ENCODE measurements at regions of chr1 and their contacts with region 1.

Region 1: DNA sequence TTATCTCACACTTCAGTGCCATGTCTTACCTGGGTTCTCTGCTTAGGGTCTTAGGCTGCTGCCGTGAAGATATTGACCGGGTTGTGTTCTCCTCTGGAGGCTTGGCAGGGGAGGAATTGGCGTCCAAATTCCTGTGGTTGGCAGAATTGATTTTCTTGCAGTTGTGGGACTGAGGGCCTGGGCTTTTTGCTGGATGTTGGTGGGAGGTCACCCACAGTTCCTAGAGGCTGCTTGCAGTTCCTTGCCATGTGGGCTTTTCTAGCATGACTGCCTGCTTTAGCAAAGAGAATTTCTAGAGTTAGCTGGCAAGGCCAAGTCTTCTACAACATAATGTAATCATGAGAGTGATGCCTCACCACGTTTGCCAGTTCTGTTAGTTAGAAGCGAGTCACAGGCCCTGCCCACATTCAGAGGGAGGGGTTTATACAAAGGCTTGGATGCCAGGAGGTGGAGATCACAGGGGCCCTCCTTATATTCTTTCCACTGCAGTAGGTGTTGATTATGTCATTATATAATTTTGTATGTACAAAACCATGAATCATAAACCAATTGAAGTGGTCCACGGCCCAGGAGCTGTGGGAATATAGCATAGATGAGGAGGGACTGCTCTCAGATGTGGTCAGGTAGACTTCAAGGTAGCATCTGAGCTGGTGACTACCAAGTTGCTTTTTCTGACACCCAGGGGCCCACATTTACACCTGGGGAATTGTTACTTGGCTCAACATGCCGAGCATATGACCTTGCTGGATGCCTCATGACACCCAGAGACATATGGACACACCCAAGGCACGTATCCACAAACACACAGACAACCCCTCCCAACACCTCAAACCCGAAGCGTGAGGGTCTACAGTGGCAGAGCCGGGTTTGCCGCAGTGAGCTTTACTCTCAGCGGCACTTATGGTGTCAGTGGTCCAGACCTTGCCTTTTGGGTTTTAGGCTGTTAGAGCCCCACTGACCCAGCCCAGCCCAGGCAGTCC is 6.7 kb downstream of the UBL4B start:
- DNase-seq: no peak
- ATAC-seq: peak; percentile 52; the same call in 1 of the 2 replicates
- H3K4me3 ChIP-seq: no peak overlapping the region
- H3K27ac ChIP-seq: no peak overlapping the region
- H3K4me1 ChIP-seq: peaks cover 0 to 11% of the 10 kb centered on the region in 2 experiments; a peak in 2 of 4 replicates
- H3K27me3 ChIP-seq: peaks cover 2% of the 10 kb centered on the region; the same call in 1 of the 2 replicates
- CTCF ChIP-seq: no peak
- POLR2A ChIP-seq: no peak
- RAD21 ChIP-seq: no peak

Region 2: GRCh38 chr1:110053557-110054428 is 65.1 kb before region 1 on chr1:
- CTCF ChIA-PET with region 1: interaction called, 3 read pairs
- POLR2A ChIA-PET with region 1: no interaction called
- RAD21 ChIA-PET with region 1: no interaction called
- intact Hi-C with region 1: loop called (anchors 2 kb)
- DNase-seq: no peak
- ATAC-seq: peak; percentile 93
- H3K4me3 ChIP-seq: no peak overlapping the region
- H3K27ac ChIP-seq: no peak overlapping the region
- H3K4me1 ChIP-seq: no peaks in the 10 kb centered on the region
- H3K27me3 ChIP-seq: no peaks in the 10 kb centered on the region
- CTCF ChIP-seq: peak; percentile 63 to 99 (median 97)
- POLR2A ChIP-seq: no peak
- RAD21 ChIP-seq: peak; percentile 69

Region 3: GRCh38 chr1:110254996-110255787 is 136.3 kb after region 1 on chr1:
- CTCF ChIA-PET with region 1: no interaction called
- POLR2A ChIA-PET with region 1: no interaction called
- RAD21 ChIA-PET with region 1: no interaction called
- intact Hi-C with region 1: no loop called
- DNase-seq: no peak
- ATAC-seq: no peak; the same call in 1 of the 2 replicates
- H3K4me3 ChIP-seq: no peak overlapping the region
- H3K27ac ChIP-seq: no peak overlapping the region
- H3K4me1 ChIP-seq: peaks cover 0 to 8% of the 10 kb centered on the region in 2 experiments; a peak in 2 of 4 replicates
- H3K27me3 ChIP-seq: no peaks in the 10 kb centered on the region
- CTCF ChIP-seq: no peak
- POLR2A ChIP-seq: no peak
- RAD21 ChIP-seq: no peak